Activated naive CD8-positive, alpha-beta T cell treated with anti-CD3 and anti-CD28 coated beads, Interleukin-2, amount 10 ng/mL, durations not matched to agents 7 days and 5 days (primary cell): ENCODE measurements at regions of chr11 and their contacts with region 1.

Region 1: GRCh38 chr11:2992234-2992996 is at the start of gene NAP1L4:
- DNase-seq: peak; percentile 94
- ATAC-seq: peak; percentile 87
- H3K4me3 Mint-ChIP-seq: peak within 1 kb of the TSS; percentile 96
- H3K27ac Mint-ChIP-seq: peak within 1 kb of the TSS; percentile 98
- H3K4me1 Mint-ChIP-seq: peaks cover 11% of the 10 kb centered on the region
- H3K27me3 Mint-ChIP-seq: no peaks in the 10 kb centered on the region
- total RNA-seq, gene NAP1L4: 346 to 363 TPM

Region 2: DNA sequence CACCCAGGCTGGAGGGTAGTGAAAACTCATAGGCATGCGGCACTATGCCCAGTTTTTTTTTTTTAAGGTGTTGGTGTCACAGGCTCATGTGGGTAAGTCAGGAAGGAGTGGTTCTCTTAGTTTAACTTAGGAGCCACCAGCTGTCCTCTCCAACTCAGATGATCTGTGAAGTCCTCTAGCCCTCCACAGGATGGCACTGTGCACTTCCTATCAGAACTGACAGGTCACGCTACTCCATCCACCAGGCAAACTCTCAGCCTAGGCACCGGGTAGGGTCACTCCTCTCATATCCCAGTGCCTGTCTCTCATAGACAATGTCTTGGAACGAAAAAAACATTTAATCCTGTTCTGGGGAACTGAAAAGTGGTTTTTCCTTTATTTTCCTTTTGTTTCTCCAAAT is 16.8 kb before region 1 on chr11:
- POLR2A ChIA-PET with region 1: interaction called, 22 read pairs
- DNase-seq: no peak
- ATAC-seq: peak; percentile 93
- H3K4me3 Mint-ChIP-seq: no peak overlapping the region
- H3K27ac Mint-ChIP-seq: peak overlapping the region; percentile 56
- H3K4me1 Mint-ChIP-seq: peaks cover 34% of the 10 kb centered on the region
- H3K27me3 Mint-ChIP-seq: no peaks in the 10 kb centered on the region

Region 3: GRCh38 chr11:3037040-3037944 is 44.9 kb after region 1 on chr11:
- POLR2A ChIA-PET with region 1: no interaction called
- DNase-seq: peak; percentile 61
- ATAC-seq: peak; percentile 61
- H3K4me3 Mint-ChIP-seq: no peak overlapping the region
- H3K27ac Mint-ChIP-seq: peak overlapping the region; percentile 25
- H3K4me1 Mint-ChIP-seq: peaks cover 20% of the 10 kb centered on the region
- H3K27me3 Mint-ChIP-seq: no peaks in the 10 kb centered on the region

Region 4: GRCh38 chr11:3057069-3057963 is 64.9 kb after region 1 on chr11 and contains the start of gene CARS1:
- POLR2A ChIA-PET with region 1: interaction called, 10 read pairs
- DNase-seq: peak; percentile 95
- ATAC-seq: peak; percentile 94
- H3K4me3 Mint-ChIP-seq: peak within 1 kb of the TSS; percentile 87
- H3K27ac Mint-ChIP-seq: peak within 1 kb of the TSS; percentile 88
- H3K4me1 Mint-ChIP-seq: peaks cover 32% of the 10 kb centered on the region
- H3K27me3 Mint-ChIP-seq: peaks cover 7% of the 10 kb centered on the region
- total RNA-seq, gene CARS1: 100 to 111 TPM

Region 5: GRCh38 chr11:3095712-3096361 is 103.4 kb after region 1 on chr11:
- POLR2A ChIA-PET with region 1: no interaction called
- DNase-seq: no peak
- ATAC-seq: no peak
- H3K4me3 Mint-ChIP-seq: no peak overlapping the region
- H3K27ac Mint-ChIP-seq: no peak overlapping the region
- H3K4me1 Mint-ChIP-seq: peaks cover 9% of the 10 kb centered on the region
- H3K27me3 Mint-ChIP-seq: peaks cover 2% of the 10 kb centered on the region